GM10248 (cell line): ENCODE measurements at regions of chr2 and their contacts with region 1.

Region 1: DNA sequence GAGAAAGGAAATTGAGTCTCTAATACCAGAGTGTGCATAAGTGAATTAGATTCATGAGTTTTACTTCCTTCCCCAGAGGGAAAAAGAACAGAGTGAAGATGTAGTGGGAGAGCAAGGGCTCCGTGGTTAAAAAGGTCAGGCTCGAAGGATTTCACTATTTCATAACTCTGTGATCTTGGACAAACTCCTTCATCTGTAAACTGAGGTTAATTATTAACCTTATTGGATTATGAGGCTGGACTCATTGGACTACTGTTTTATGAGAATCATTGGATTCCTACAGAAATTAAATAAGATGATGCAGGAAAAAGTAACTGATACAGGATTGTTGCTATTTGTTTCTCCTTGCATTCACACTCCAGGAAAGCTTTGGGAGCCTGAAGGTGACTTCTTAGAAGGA is 45.0 kb downstream of the SRD5A2 start:
- DNase-seq: no peak
- CTCF ChIP-seq: no peak

Region 2: GRCh38 chr2:31523871-31524492 is 11.8 kb before region 1 on chr2:
- CTCF ChIA-PET with region 1: interaction called, 12 read pairs
- POLR2A ChIA-PET with region 1: no interaction called
- DNase-seq: peak; percentile 21
- CTCF ChIP-seq: peak; percentile 70

Region 3: DNA sequence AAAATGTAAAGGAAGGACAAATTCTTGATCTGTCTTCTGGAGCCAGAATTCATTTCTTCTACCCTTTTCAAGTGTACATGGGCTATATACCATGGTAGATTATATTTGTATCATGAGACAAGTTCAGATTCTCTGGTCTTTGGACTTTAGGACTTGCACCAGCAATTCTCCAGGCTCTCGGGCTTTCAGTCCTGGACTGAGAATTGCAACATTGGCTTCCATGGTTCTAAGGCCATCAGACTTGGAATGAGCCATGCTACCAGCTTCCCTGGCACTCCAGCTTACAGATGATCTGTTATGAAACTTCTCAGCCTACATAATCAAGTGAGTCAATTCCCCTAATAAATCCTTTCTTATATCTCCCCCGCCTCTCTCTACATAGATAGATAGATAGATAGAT is 11.7 kb after region 1 on chr2:
- CTCF ChIA-PET with region 1: no interaction called
- POLR2A ChIA-PET with region 1: no interaction called
- DNase-seq: no peak
- CTCF ChIP-seq: no peak